ENCODE measurements at regions of chr13 and their contacts with region 1.

Region 1: GRCh38 chr13:33817901-33818706 is at the start of gene RFC3:
- DNase-seq: peak; percentile 88 to 91 (median 89)
- H3K4me3 ChIP-seq: peak within 1 kb of the TSS; percentile 53 to 95
- H3K4me3 Mint-ChIP-seq: peak within 1 kb of the TSS; percentile 89 to 97 (median 91)
- H3K27ac ChIP-seq: peak within 1 kb of the TSS; percentile 55
- H3K27ac Mint-ChIP-seq: peak within 1 kb of the TSS; percentile 90 to 98 (median 94)
- H3K4me1 ChIP-seq: peaks cover 14% of the 10 kb centered on the region
- H3K4me1 Mint-ChIP-seq: peaks cover 6 to 21% (median 12%) of the 10 kb centered on the region in 4 donors
- H3K27me3 ChIP-seq: no peaks in the 10 kb centered on the region
- H3K27me3 Mint-ChIP-seq: peaks cover 0 to 1% of the 10 kb centered on the region in 2 donors
- total RNA-seq, gene RFC3: 4.9 to 5.1 TPM

Region 2: DNA sequence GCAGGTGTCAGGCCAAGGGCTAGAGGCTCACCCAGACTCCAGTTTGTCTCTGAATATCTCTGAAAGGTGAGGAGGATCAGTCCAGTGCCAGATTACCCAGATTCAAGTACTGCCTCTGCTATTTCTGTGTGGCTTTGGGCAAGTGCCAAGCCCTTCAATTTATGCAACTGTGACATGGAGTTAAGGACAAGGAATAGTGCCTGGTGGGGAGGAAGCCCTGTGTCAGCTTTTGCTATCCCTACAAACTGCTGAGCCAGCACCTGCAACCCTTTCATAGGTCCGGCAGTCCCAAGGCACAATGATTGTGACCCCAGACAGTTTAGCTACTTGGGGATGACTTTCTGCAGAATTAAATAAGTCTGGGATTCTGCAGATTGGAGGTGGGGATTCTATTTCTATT is 678.9 kb before region 1 on chr13:
- CTCF ChIA-PET with region 1: no interaction called
- POLR2A ChIA-PET with region 1: no interaction called
- intact Hi-C with region 1: no loop called
- DNase-seq: no peak
- H3K4me3 ChIP-seq: no peak overlapping the region
- H3K4me3 Mint-ChIP-seq: no peak overlapping the region
- H3K27ac ChIP-seq: no peak overlapping the region
- H3K27ac Mint-ChIP-seq: no peak overlapping the region
- H3K4me1 ChIP-seq: no peaks in the 10 kb centered on the region
- H3K4me1 Mint-ChIP-seq: no peaks in the 10 kb centered on the region
- H3K27me3 ChIP-seq: no peaks in the 10 kb centered on the region
- H3K27me3 Mint-ChIP-seq: peaks cover 1 to 9% of the 10 kb centered on the region in 2 donors

Region 3: DNA sequence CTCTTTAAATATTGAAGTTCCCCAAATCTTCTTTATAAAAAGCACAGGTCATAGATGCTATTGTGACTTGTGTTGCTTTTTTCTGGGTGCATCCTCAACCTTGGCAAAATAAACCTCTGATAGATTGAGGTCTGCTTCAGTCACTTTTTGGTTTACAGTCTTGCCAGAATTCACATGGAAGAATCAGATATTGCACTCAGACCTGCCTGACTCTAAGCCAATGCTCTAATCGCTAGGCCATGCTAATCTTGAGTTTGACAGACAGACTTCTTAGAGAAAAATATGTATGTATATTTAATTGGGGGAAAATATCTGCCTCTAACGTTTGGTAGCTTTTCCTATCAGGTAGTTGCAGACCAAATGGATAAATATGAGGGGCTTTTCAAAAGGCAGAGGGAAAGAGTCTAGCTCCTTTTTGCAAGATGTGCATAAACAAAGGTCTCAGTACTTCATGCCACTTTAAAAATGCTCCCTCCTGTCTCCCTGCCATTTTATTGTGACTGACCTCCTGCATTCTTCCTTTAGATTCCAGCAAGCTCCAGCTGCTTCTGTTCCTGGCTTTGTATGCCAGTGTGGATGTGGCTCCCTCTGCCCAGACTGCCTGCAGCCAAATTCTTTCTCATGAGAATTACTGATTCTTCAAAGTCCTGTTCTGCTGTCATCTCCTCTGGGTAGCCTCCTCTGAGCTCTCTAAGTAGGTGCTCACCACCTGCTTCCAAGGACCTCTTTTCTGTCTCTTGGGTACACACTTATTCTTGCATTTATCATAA is 42.6 kb before region 1 on chr13:
- CTCF ChIA-PET with region 1: no interaction called
- POLR2A ChIA-PET with region 1: no interaction called
- intact Hi-C with region 1: no loop called
- DNase-seq: no peak
- H3K4me3 ChIP-seq: no peak overlapping the region
- H3K4me3 Mint-ChIP-seq: no peak overlapping the region
- H3K27ac ChIP-seq: no peak overlapping the region
- H3K27ac Mint-ChIP-seq: no peak overlapping the region
- H3K4me1 ChIP-seq: no peaks in the 10 kb centered on the region
- H3K4me1 Mint-ChIP-seq: no peaks in the 10 kb centered on the region
- H3K27me3 ChIP-seq: no peaks in the 10 kb centered on the region
- H3K27me3 Mint-ChIP-seq: peaks cover 2 to 12% of the 10 kb centered on the region in 2 donors

Region 4: DNA sequence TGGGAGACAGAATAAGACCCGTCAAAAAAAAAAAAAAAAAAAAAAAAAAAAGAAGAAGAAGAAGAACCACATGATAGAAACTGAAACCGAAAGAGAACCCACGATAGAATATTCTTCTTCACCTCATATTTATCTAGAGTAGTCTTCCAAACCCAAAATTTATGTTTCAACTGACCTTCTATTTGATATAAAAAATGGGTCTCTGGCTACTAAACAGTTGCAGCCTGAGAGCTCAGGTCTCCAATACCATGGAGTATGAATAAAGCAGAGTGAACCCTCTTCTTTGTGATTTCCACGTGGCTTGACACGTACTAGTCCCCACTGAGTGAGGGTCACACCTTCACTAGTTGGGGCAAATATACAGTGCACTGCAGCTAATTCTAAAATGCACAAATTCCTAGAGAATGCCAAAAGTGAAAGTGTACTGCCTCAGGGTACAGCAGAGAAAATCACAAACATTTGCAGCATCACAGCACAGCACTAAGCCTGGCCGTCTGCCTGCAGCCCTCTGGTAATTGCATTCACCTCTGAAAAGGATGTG is 31.0 kb before region 1 on chr13:
- CTCF ChIA-PET with region 1: no interaction called
- POLR2A ChIA-PET with region 1: no interaction called
- intact Hi-C with region 1: loop called (anchors 1 kb)
- DNase-seq: peak; percentile 30 to 42 (median 36)
- H3K4me3 ChIP-seq: peak overlapping the region; percentile 2 to 67
- H3K4me3 Mint-ChIP-seq: peak overlapping the region; percentile 84 to 91 (median 86)
- H3K27ac ChIP-seq: peak overlapping the region; percentile 49
- H3K27ac Mint-ChIP-seq: peak overlapping the region; percentile 75 to 90 (median 87)
- H3K4me1 ChIP-seq: peaks cover 14% of the 10 kb centered on the region
- H3K4me1 Mint-ChIP-seq: peaks cover 13 to 16% (median 14%) of the 10 kb centered on the region in 4 donors
- H3K27me3 ChIP-seq: no peaks in the 10 kb centered on the region
- H3K27me3 Mint-ChIP-seq: peaks cover 3% of the 10 kb centered on the region in 2 donors

Region 5: GRCh38 chr13:33865945-33866344 is 47.8 kb after region 1 on chr13:
- CTCF ChIA-PET with region 1: no interaction called
- POLR2A ChIA-PET with region 1: no interaction called
- intact Hi-C with region 1: no loop called
- DNase-seq: no peak
- H3K4me3 ChIP-seq: no peak overlapping the region
- H3K4me3 Mint-ChIP-seq: no peak overlapping the region
- H3K27ac ChIP-seq: no peak overlapping the region
- H3K27ac Mint-ChIP-seq: no peak overlapping the region
- H3K4me1 ChIP-seq: no peaks in the 10 kb centered on the region
- H3K4me1 Mint-ChIP-seq: no peaks in the 10 kb centered on the region
- H3K27me3 ChIP-seq: no peaks in the 10 kb centered on the region
- H3K27me3 Mint-ChIP-seq: no peaks in the 10 kb centered on the region

Region 6: GRCh38 chr13:35164324-35164932 is 1346.3 kb after region 1 on chr13:
- CTCF ChIA-PET with region 1: no interaction called
- POLR2A ChIA-PET with region 1: no interaction called
- intact Hi-C with region 1: loop called (anchors 10 kb)
- DNase-seq: peak in 4 of 5 donors; percentile 22 to 33 (median 29)
- H3K4me3 ChIP-seq: no peak overlapping the region
- H3K4me3 Mint-ChIP-seq: no peak overlapping the region
- H3K27ac ChIP-seq: no peak overlapping the region
- H3K27ac Mint-ChIP-seq: no peak overlapping the region
- H3K4me1 ChIP-seq: peaks cover 4% of the 10 kb centered on the region
- H3K4me1 Mint-ChIP-seq: peaks cover 0 to 5% (median 4%) of the 10 kb centered on the region in 4 donors
- H3K27me3 ChIP-seq: no peaks in the 10 kb centered on the region
- H3K27me3 Mint-ChIP-seq: no peaks in the 10 kb centered on the region